ENCODE measurements at regions of chr20 and their contacts with region 1.

Region 1: DNA sequence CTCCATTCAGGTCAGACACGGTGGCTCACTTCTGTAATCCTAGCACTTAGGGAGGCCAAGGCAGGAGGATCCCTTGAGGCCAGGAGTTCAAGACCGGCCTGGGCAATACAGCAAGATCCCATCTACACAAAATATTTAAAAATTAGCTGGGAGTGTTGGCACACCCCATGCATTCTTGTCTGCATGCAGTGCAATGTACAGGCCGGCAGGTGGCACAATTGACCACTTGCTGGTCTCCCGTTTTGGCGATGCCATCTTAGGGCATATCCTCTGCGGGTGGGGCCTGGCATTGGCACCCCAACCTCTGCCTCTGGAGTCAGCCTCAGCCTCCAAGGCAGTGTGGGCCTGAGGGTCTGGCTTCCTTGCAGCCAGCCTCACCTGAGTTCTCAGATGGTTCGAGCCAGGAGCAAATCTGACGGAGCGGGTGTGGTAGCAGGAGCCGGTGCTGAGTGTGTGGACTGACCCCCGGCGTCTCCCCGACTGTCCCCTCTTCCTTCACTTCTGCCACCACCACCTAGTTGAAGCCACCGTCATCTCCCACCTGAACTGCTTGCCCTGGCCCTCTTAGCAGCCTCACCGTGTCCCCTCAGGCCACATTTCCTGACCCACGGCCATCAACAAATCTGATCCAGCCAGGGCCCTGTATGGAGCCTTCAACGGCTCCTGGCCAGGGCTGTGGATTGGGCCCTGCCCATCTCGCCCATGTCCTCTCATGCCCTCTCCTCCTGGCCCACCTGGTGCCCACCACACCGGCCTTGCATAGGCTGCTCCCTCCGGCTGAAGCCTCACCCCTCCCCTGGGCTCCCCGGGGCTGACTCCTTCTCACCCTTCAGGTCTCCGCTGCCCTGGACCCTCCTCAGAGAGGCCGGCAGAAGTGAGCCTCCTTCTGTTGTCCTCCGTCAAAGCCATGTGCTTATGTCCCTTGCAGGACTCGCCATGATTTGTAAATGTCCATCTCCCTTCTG is 44.0 kb downstream of the EFCAB8 start:
- H3K4me3 Mint-ChIP-seq: no peak overlapping the region
- H3K27ac Mint-ChIP-seq: no peak overlapping the region
- H3K4me1 Mint-ChIP-seq: no peaks in the 10 kb centered on the region
- H3K27me3 Mint-ChIP-seq: peaks cover 3% of the 10 kb centered on the region

Region 2: DNA sequence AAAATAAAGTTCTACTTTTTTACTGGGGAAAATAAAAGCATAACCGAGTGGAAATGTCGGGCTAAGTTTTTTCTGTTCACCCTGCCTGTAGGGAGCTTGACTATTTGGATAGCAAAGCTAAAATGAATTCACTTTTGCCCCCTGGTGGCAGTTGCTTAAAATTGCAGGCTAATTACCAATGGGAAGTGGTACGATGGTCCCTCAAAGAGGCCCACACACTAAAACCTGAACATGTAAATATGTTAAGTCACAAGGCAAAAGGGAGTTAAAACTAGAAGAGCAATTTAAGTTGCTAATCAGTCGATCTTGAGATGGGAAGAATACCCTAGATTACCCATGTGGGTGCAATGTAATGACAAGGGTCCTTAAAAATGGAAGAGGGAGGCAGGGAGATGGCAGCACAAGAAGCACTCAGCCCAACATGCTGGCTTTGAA is 102.4 kb after region 1 on chr20:
- intact Hi-C with region 1: loop called (anchors 1 kb)
- H3K4me3 Mint-ChIP-seq: no peak overlapping the region
- H3K27ac Mint-ChIP-seq: no peak overlapping the region
- H3K4me1 Mint-ChIP-seq: peaks cover 2% of the 10 kb centered on the region
- H3K27me3 Mint-ChIP-seq: no peaks in the 10 kb centered on the region

Region 3: GRCh38 chr20:33081411-33082154 is 178.8 kb after region 1 on chr20:
- intact Hi-C with region 1: no loop called
- H3K4me3 Mint-ChIP-seq: no peak overlapping the region
- H3K27ac Mint-ChIP-seq: no peak overlapping the region
- H3K4me1 Mint-ChIP-seq: no peaks in the 10 kb centered on the region
- H3K27me3 Mint-ChIP-seq: no peaks in the 10 kb centered on the region

Region 4: GRCh38 chr20:33097001-33097400 is 194.3 kb after region 1 on chr20:
- intact Hi-C with region 1: loop called (anchors 5 kb)
- H3K4me3 Mint-ChIP-seq: no peak overlapping the region
- H3K27ac Mint-ChIP-seq: no peak overlapping the region
- H3K4me1 Mint-ChIP-seq: no peaks in the 10 kb centered on the region
- H3K27me3 Mint-ChIP-seq: no peaks in the 10 kb centered on the region

Region 5: GRCh38 chr20:33299111-33299603 is 396.4 kb after region 1 on chr20:
- intact Hi-C with region 1: loop called (anchors 1 kb)
- H3K4me3 Mint-ChIP-seq: no peak overlapping the region
- H3K27ac Mint-ChIP-seq: no peak overlapping the region
- H3K4me1 Mint-ChIP-seq: peaks cover 4% of the 10 kb centered on the region
- H3K27me3 Mint-ChIP-seq: peaks cover 14% of the 10 kb centered on the region